Right ventricle myocardium inferior (tissue), 1 donor: ENCODE measurements at regions of chr6 and their contacts with region 1.

Region 1: GRCh38 chr6:145036848-145037567 is 698.3 kb downstream of the EPM2A start:
- DNase-seq: no peak
- ATAC-seq: peak; percentile 62

Region 2: DNA sequence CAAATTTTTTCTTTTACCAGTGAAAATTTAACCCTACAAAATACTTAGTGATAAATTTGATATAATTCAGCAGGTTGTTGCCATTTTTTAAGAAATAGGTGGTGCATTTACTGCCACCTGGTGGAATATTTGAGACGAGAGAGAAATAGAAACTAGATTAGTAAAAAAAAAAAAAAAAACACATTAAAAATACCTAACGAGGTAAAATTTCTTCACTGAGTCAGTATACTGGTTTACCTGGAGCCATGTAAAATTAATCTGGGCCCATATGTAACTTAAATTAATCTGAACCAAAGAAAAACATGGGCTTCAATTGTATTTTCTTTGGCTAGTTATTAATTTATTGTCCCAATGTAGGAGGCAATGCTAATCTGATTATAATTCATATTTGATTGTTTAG is 177.6 kb after region 1 on chr6:
- intact Hi-C with region 1: loop called (anchors 10 kb)
- DNase-seq: no peak
- ATAC-seq: no peak